ENCODE measurements at regions of chr4 and their contacts with region 1.

Region 1: GRCh38 chr4:172035562-172035961 is 222.4 kb downstream of the GALNTL6 start:
- DNase-seq: no peak
- ATAC-seq: no peak
- H3K4me3 Mint-ChIP-seq: no peak overlapping the region
- H3K27ac Mint-ChIP-seq: no peak overlapping the region
- H3K4me1 Mint-ChIP-seq: no peaks in the 10 kb centered on the region
- H3K27me3 Mint-ChIP-seq: no peaks in the 10 kb centered on the region
- CTCF ChIP-seq: no peak

Region 2: GRCh38 chr4:170138580-170139194 is 1896.9 kb before region 1 on chr4:
- CTCF ChIA-PET with region 1: no interaction called
- POLR2A ChIA-PET with region 1: no interaction called
- intact Hi-C with region 1: loop called (anchors 2 kb)
- DNase-seq: peak; percentile 31
- ATAC-seq: peak; percentile 47
- H3K4me3 Mint-ChIP-seq: no peak overlapping the region
- H3K27ac Mint-ChIP-seq: no peak overlapping the region
- H3K4me1 Mint-ChIP-seq: no peaks in the 10 kb centered on the region
- H3K27me3 Mint-ChIP-seq: peaks cover 2% of the 10 kb centered on the region
- CTCF ChIP-seq: no peak

Region 3: DNA sequence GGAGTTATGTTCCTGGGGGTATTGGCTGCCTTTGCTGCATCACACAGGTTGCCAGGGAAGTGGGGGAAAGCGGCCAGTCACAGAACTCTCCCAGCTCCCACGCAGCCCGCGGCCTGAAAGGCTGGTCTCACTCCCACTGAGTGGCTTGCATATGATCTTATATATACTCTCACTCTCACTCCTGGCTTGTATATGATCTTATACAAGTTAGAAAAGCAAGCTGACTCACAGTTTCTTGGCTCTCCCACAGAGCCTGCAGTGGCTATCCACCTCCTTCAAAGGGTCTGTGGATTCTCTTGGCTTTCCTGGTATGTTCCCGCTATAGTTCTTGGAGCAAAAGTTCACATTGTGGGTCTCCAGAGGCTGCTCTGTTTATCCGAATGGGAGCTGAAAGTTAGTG is 1055.8 kb before region 1 on chr4:
- CTCF ChIA-PET with region 1: no interaction called
- POLR2A ChIA-PET with region 1: no interaction called
- intact Hi-C with region 1: loop called (anchors 10 kb)
- DNase-seq: no peak
- ATAC-seq: no peak
- H3K4me3 Mint-ChIP-seq: no peak overlapping the region
- H3K27ac Mint-ChIP-seq: no peak overlapping the region
- H3K4me1 Mint-ChIP-seq: no peaks in the 10 kb centered on the region
- H3K27me3 Mint-ChIP-seq: no peaks in the 10 kb centered on the region
- CTCF ChIP-seq: no peak

Region 4: DNA sequence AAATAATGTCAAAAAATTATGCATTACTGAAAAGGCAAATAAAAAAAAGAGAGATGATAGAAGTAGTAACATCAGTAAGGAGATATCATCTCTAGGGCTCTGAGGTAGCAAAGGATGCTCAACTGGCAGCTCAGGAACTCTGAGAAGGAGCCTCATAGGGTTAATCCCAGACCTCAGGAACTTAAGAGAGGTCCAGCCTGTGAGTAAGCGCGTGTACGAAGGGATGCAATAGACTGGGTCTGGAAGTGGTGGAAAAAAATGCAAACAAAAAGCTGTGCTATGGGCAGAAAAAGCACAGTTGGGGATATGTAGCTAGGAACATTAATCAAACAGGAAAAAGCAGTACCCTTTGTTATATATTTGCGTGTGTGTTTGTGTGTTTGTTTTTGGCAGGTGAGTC is 59.6 kb after region 1 on chr4:
- CTCF ChIA-PET with region 1: no interaction called
- POLR2A ChIA-PET with region 1: no interaction called
- intact Hi-C with region 1: no loop called
- DNase-seq: no peak
- ATAC-seq: no peak
- H3K4me3 Mint-ChIP-seq: no peak overlapping the region
- H3K27ac Mint-ChIP-seq: no peak overlapping the region
- H3K4me1 Mint-ChIP-seq: no peaks in the 10 kb centered on the region
- H3K27me3 Mint-ChIP-seq: no peaks in the 10 kb centered on the region
- CTCF ChIP-seq: no peak

Region 5: DNA sequence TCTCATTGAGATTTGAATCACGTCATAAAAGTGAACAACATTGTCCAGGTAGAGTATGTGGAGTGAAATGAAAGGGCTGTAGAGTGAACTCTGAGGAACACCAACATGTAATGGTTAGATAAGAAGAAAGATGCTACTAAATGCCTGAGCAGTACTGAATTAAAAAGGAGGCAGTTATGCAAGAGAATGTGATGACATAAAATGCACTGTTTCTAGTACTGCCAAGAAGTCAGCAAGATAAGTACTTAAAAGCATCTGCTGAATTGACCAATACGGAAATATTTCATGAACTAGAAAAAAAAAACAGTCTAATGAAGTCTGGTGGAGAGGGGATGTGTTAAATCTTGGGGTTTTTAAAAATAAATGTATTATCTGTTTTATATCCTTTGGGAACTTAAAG is 549.3 kb after region 1 on chr4:
- CTCF ChIA-PET with region 1: no interaction called
- POLR2A ChIA-PET with region 1: no interaction called
- intact Hi-C with region 1: no loop called
- DNase-seq: no peak
- ATAC-seq: no peak
- H3K4me3 Mint-ChIP-seq: no peak overlapping the region
- H3K27ac Mint-ChIP-seq: no peak overlapping the region
- H3K4me1 Mint-ChIP-seq: no peaks in the 10 kb centered on the region
- H3K27me3 Mint-ChIP-seq: no peaks in the 10 kb centered on the region
- CTCF ChIP-seq: no peak

Measured in activated B cell treated with CpG ODN at 0.5 μM for 24 hours (primary cell).